ENCODE measurements at regions of chr9 and their contacts with region 1.

Region 1: GRCh38 chr9:109411798-109412352 is 86.2 kb downstream of the PTPN3 start:
- DNase-seq: no peak
- H3K4me3 Mint-ChIP-seq: peak overlapping the region; percentile 82
- H3K27ac Mint-ChIP-seq: peak overlapping the region; percentile 97
- H3K4me1 Mint-ChIP-seq: peaks cover 68% of the 10 kb centered on the region
- H3K27me3 Mint-ChIP-seq: no peaks in the 10 kb centered on the region

Region 2: DNA sequence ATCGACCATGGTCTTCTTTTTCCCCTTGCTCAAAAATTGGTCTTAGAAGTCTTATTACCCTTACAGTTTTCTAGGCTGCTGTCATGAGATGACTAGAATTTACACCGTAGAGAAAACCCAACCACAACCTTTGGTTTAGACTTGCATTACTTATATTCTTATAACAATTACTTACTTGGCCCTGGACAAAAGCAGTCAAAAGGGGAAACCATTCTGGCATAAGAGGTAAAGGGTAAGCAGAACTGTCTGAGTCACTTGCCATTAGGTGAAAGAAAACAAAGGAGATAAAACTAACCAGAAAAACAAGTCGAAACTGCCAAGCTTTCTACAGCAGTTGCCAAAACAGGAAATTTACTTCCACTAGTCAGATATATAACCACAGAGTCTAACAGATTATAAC is 310.1 kb before region 1 on chr9:
- intact Hi-C with region 1: loop called (anchors 2 kb)
- DNase-seq: no peak
- H3K4me3 Mint-ChIP-seq: peak overlapping the region; percentile 58
- H3K27ac Mint-ChIP-seq: peak overlapping the region; percentile 83
- H3K4me1 Mint-ChIP-seq: peaks cover 60% of the 10 kb centered on the region
- H3K27me3 Mint-ChIP-seq: no peaks in the 10 kb centered on the region

Region 3: GRCh38 chr9:109143881-109144562 is 267.9 kb before region 1 on chr9:
- intact Hi-C with region 1: no loop called
- DNase-seq: peak; percentile 16
- H3K4me3 Mint-ChIP-seq: no peak overlapping the region
- H3K27ac Mint-ChIP-seq: no peak overlapping the region
- H3K4me1 Mint-ChIP-seq: peaks cover 4% of the 10 kb centered on the region
- H3K27me3 Mint-ChIP-seq: peaks cover 28% of the 10 kb centered on the region

Region 4: DNA sequence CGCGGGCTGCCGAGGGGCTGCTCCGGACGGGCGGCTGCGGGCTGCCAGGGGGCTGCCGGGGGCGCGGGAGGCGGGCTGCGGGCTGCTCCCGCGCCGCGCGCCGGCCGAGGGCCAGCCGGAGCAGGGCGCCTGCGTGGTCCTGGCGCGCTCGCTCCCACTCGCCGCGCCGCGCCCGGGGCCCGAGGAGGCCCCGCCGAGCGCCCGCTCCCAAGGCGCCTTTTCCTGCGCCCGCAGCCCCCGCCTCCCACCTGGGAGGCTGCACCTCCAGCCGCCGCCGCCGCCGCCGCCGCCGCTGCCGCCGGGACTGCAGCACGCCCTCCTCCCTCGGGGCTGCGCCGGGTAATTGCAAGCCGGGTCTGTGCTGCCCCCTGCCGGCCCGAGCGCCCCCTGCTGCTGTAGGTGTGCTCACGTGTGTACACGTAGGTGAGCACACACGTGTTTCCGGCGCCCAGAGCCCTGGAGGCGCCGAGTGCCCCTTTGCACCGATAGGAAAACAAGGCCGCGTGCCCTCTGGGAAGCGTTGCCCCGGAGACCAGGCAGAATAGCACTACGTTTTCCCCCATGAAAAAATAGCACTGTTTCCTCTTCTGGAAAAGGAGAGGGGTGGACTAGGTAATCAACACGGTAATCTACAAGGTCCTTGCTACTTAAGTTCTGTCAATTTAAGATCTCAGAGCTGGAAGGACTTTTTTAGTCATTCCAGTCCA is 91.0 kb before region 1 on chr9 and contains the start of gene EPB41L4B:
- intact Hi-C with region 1: loop called (anchors 2 kb)
- DNase-seq: peak; percentile 86
- H3K4me3 Mint-ChIP-seq: peak within 1 kb of the TSS; percentile 79
- H3K27ac Mint-ChIP-seq: no peak within 1 kb of the TSS
- H3K4me1 Mint-ChIP-seq: peaks cover 8% of the 10 kb centered on the region
- H3K27me3 Mint-ChIP-seq: peaks cover 60% of the 10 kb centered on the region
- total RNA-seq, gene EPB41L4B: 1.5 and 1.6 TPM in 2 replicates

Region 5: GRCh38 chr9:109440797-109441287 is 29.0 kb after region 1 on chr9:
- intact Hi-C with region 1: loop called (anchors 1 kb)
- DNase-seq: peak; percentile 60
- H3K4me3 Mint-ChIP-seq: no peak overlapping the region
- H3K27ac Mint-ChIP-seq: peak overlapping the region; percentile 80
- H3K4me1 Mint-ChIP-seq: peaks cover 29% of the 10 kb centered on the region
- H3K27me3 Mint-ChIP-seq: peaks cover 18% of the 10 kb centered on the region

Region 6: DNA sequence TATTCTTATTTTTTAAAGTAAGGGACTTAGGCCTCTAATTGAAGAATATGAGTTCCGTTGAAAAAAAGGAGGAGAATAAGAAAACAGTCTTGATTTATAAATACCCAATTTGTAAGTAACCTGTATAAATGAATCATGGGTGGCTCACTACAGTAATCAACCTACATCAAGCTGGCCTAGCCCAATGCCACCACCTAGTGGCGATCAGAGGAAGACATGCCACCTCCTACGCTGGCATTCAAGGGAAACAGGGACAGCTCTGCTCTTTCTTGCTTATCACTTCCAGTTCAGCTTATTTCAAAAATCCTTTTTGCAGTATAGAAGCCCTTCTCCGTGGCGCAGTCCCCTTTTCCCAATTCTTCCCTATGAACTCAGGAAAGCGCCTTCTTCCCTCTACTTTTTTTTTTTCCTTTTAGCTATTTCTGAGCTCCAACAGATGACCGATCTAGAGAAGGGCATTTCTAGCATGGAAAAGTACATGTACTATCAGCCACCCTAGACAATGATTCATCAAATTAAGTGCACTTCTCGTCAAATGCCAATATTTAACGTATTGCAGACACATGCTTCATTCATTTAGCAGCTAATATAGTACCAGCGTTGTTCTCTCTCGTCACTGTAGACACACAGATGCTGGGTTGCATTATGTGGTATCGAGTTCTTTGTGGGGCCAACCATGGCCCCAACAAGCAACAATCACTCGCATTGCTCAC is 57.9 kb after region 1 on chr9:
- intact Hi-C with region 1: loop called (anchors 1 kb)
- DNase-seq: peak; percentile 58
- H3K4me3 Mint-ChIP-seq: no peak overlapping the region
- H3K27ac Mint-ChIP-seq: no peak overlapping the region
- H3K4me1 Mint-ChIP-seq: peaks cover 38% of the 10 kb centered on the region
- H3K27me3 Mint-ChIP-seq: peaks cover 13% of the 10 kb centered on the region

Region 7: DNA sequence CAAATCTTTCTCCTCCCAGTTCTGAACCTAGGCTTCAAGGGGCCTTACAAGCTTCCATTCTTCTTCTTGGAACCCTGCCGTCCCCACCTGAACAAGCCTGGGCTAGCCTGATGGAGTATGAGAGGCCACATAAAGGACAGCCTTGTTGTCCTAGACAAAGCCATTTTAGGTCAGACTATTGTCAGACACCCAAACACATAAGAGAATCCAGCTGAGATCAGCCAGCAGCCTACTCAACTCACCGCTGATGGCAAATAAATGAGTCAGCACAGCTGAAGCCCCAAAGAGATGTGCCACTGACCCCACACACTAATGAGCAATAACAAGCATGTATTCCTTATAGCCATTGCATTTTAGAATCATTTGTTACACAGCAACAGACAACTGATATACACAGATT is 1133.8 kb after region 1 on chr9:
- intact Hi-C with region 1: no loop called
- DNase-seq: no peak
- H3K4me3 Mint-ChIP-seq: no peak overlapping the region
- H3K27ac Mint-ChIP-seq: no peak overlapping the region
- H3K4me1 Mint-ChIP-seq: no peaks in the 10 kb centered on the region
- H3K27me3 Mint-ChIP-seq: no peaks in the 10 kb centered on the region